ENCODE measurements at regions of chrX and their contacts with region 1.

Region 1: DNA sequence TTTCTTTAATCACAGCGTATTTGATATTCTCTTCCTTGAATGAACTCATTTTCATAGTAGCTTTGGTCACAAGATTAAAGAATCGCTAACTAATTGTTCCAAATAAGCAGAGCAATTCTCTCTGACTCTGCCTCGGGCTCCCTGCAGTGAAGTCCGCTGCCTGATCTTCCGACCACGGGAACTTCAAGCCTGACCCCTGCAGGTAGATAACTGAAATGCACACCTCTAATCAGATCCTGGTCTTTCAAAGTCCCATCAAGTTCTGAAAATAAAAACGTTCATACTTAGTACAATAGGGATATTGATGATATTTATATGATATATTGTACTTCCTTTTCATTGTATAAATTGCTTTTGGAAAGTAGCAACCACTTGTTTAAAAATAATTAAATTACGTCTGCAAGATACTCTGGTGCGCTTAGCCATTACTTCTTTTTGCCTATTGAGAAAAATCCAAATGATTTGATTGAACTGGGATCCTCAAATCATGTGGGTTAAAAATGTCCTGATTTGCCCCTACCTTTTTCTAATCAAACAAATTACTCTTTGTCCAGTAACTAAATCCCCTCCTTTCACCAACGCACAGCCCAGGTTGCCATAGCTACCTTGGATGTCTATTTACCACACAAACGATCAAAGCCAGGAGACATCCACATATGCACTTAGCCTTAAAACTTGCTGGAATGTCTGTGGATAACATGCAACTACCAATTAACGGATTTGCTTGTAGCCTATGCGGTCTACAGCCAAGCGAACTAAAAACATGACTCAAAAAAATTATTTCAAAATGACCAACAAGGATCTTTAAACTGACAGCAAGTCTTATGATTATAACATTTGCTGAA is 4.2 kb downstream of the MID1 start:
- DNase-seq: peak; percentile 71
- H3K4me3 Mint-ChIP-seq: peak overlapping the region; percentile 35
- H3K27ac Mint-ChIP-seq: no peak overlapping the region
- H3K4me1 Mint-ChIP-seq: peaks cover 48% of the 10 kb centered on the region
- H3K27me3 Mint-ChIP-seq: no peaks in the 10 kb centered on the region
- CTCF ChIP-seq: peak; percentile 60

Region 2: GRCh38 chrX:10199212-10199611 is 416.9 kb before region 1 on chrX:
- CTCF ChIA-PET with region 1: interaction called, 23 read pairs
- POLR2A ChIA-PET with region 1: no interaction called
- intact Hi-C with region 1: no loop called
- DNase-seq: peak; percentile 17
- H3K4me3 Mint-ChIP-seq: no peak overlapping the region
- H3K27ac Mint-ChIP-seq: no peak overlapping the region
- H3K4me1 Mint-ChIP-seq: peaks cover 6% of the 10 kb centered on the region
- H3K27me3 Mint-ChIP-seq: no peaks in the 10 kb centered on the region
- CTCF ChIP-seq: no peak

Region 3: DNA sequence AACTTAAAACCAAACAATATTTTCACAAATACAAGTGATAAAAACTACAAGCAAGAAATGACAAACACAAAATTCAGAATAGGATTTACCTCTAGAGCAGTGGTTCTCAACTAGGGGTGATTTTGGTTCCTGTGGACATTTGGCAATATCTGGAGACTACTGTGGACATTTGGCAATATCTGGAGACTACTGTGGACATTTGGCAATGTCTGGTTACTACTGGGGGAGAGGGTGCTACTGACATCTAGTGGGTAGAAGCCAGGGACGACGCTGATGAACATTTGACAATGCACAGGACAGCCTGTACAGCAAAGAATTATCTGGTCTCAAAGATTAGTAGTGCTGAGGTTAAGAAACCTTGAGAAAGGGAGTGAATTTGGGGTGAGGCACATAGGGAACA is 289.6 kb before region 1 on chrX:
- CTCF ChIA-PET with region 1: no interaction called
- POLR2A ChIA-PET with region 1: no interaction called
- intact Hi-C with region 1: loop called (anchors 10 kb)
- DNase-seq: peak; percentile 53
- H3K4me3 Mint-ChIP-seq: no peak overlapping the region
- H3K27ac Mint-ChIP-seq: no peak overlapping the region
- H3K4me1 Mint-ChIP-seq: peaks cover 10% of the 10 kb centered on the region
- H3K27me3 Mint-ChIP-seq: peaks cover 10% of the 10 kb centered on the region
- CTCF ChIP-seq: peak; percentile 17

Region 4: DNA sequence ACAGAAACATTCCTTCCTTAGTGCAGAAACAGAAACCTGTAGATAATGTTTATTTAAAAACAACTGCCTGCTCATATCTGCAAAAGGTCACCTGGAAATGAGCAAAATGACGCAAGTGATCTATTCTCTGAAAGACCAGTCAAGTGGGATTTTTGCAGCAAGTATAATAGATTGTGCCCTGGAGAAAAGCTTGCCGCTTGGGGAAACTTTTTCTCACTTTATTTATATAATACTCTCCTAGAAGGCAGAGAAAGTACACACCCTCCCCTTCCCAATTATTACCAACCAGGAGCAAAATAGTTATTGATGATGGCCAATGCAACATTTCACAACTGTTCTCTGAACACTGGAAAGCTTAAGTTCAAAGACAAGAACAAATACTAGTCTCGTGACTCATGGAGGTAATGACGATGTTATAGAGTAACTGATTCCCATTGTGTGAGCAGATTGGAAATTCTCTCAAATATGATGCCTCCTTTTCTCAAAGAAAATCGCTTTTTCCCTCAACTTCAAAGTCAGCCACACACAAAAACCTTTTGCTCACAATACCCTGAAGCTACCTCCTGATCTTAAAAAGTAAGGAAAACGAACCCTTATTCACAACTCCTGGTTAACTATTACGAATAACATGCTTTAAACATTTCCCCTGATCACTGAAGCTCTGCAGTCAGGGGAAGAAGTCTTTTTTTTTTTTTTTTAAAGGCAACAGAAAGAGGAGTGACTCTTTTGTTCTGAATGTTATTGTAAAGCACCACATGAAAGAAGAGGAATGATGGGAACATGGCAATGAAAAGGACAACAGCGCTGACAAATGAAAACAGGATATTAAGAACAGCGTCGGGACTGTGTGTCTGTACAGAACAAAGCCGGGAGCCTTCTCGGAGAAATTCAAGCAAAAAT is 36.8 kb before region 1 on chrX:
- CTCF ChIA-PET with region 1: interaction called, 5 read pairs
- POLR2A ChIA-PET with region 1: interaction called, 11 read pairs
- intact Hi-C with region 1: no loop called
- DNase-seq: peak; percentile 69
- H3K4me3 Mint-ChIP-seq: peak overlapping the region; percentile 66
- H3K27ac Mint-ChIP-seq: peak overlapping the region; percentile 80
- H3K4me1 Mint-ChIP-seq: peaks cover 26% of the 10 kb centered on the region
- H3K27me3 Mint-ChIP-seq: no peaks in the 10 kb centered on the region
- CTCF ChIP-seq: no peak

Region 5: DNA sequence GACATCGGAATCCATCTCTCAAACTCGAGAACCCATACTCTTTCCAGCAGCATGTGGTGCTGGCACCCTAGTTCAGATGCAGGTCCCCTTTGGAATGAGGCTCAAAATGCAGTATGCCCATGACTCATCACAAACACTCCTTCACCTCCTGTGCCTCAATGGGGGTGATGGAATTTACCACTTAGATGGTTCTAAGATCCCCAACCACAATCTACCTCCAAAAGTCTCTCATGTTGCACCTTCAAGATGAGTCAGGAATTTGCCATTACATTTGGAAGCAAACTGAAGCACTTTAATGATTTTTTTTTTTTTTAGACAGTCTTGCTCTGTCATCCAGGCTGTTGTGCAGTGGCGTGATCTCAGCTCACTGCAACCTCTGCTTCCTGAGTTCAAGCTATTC is 12.8 kb after region 1 on chrX:
- CTCF ChIA-PET with region 1: interaction called, 37 read pairs
- POLR2A ChIA-PET with region 1: interaction called, 70 read pairs
- intact Hi-C with region 1: no loop called
- DNase-seq: no peak
- H3K4me3 Mint-ChIP-seq: no peak overlapping the region
- H3K27ac Mint-ChIP-seq: no peak overlapping the region
- H3K4me1 Mint-ChIP-seq: peaks cover 26% of the 10 kb centered on the region
- H3K27me3 Mint-ChIP-seq: no peaks in the 10 kb centered on the region
- CTCF ChIP-seq: no peak

Measured in MCF 10A (cell line).